Tibial artery (tissue), 4 donors: ENCODE measurements at regions of chr1 and their contacts with region 1.

Region 1: DNA sequence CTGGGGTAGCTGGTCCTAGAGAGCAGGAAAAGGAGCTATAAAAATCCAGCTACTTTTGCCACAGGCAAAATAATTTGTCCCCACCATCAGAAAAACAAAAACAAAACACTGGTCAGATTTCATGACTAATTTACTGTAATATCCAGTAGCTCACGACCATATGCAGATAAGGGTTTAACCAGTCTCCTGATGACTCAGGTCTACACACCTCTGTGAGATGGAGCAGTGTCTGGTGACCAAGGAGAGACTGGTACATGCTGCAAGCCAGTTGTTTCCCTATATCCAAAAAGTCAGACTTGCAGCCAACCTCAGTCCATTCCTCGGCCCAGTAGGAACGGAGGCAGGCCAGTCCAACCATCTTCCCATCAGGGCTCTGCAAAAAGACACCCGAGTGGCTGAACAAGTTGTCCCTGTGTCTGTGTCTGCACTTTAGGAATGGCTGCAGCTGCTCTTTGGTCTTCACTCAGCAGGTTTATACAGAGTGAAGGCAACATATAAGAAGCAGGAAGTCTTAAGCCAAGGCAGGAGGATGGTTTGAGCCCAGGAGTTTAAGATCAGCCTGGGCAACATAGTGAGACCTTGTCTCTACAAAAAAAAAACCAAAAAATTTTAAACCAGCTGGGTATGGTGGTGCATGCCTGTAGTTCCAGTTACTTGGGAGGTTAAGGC is 29.4 kb downstream of the DNASE2B start:
- DNase-seq: no peak
- H3K4me3 ChIP-seq: no peak overlapping the region
- H3K27ac ChIP-seq: no peak overlapping the region
- H3K4me1 ChIP-seq: no peaks in the 10 kb centered on the region
- H3K27me3 ChIP-seq: no peaks in the 10 kb centered on the region
- CTCF ChIP-seq: no peak

Region 2: GRCh38 chr1:84133479-84133878 is 294.2 kb before region 1 on chr1:
- intact Hi-C with region 1: loop called (anchors 5 kb)
- DNase-seq: no peak
- H3K4me3 ChIP-seq: no peak overlapping the region
- H3K27ac ChIP-seq: no peak overlapping the region
- H3K4me1 ChIP-seq: no peaks in the 10 kb centered on the region
- H3K27me3 ChIP-seq: no peaks in the 10 kb centered on the region
- CTCF ChIP-seq: no peak